ENCODE measurements at regions of chr2 and their contacts with region 1.

Region 1: GRCh38 chr2:118855451-118856279 is 8.2 kb upstream of the EN1 start:
- DNase-seq: peak; percentile 52
- ATAC-seq: peak; percentile 99
- H3K4me3 ChIP-seq: no peak overlapping the region
- H3K27ac ChIP-seq: no peak overlapping the region
- H3K4me1 ChIP-seq: no peaks in the 10 kb centered on the region
- H3K27me3 ChIP-seq: peaks cover 95% of the 10 kb centered on the region
- CTCF ChIP-seq: peak; percentile 94
- POLR2A ChIP-seq: no peak
- RAD21 ChIP-seq: peak; percentile 96

Region 2: DNA sequence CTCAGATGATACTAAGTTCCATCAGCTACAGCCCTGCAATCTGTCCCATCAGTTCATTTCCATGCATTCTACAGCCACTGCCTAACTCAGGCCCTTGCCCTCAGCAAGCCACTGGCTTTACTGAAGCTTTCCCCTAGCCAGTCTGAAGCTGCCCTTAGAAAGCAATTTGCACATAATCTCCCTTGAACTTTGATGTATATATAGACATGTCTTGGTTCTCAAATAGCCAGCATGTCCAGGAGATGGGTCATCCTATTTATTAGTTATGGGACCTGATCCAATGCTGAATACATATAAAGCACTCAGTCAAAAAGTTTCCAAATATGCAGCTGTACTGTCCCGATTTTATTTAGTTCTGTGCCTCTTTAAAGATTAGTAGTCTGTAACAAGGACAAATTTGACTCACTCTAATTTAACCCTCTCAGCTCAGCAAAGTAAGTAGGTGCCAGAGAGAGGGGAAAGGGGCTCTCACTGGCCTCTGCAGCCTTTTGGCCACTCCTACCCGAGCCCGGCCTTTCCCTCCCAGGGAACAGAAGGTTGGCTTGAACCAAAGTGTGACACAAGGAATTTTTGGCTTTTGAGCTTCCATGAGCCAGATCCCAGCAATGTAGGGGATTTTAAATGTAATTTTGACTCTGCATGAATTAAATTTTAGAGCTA is 912.5 kb before region 1 on chr2:
- CTCF ChIA-PET with region 1: no interaction called
- POLR2A ChIA-PET with region 1: no interaction called
- dilution Hi-C with region 1: no loop called
- in situ Hi-C with region 1: no loop called
- intact Hi-C with region 1: no loop called
- DNase-seq: peak; percentile 79
- ATAC-seq: peak; percentile 88
- H3K4me3 ChIP-seq: no peak overlapping the region
- H3K27ac ChIP-seq: 0 out of 2 replicates have a peak overlapping the region, but pooled peaks have one; percentile 10
- H3K4me1 ChIP-seq: peaks cover 8% of the 10 kb centered on the region
- H3K27me3 ChIP-seq: no peaks in the 10 kb centered on the region
- CTCF ChIP-seq: no peak
- POLR2A ChIP-seq: no peak
- RAD21 ChIP-seq: no peak

Region 3: GRCh38 chr2:118032169-118033013 is 823.3 kb before region 1 on chr2:
- CTCF ChIA-PET with region 1: no interaction called
- POLR2A ChIA-PET with region 1: no interaction called
- dilution Hi-C with region 1: no loop called
- in situ Hi-C with region 1: loop called (anchors 25 kb)
- intact Hi-C with region 1: no loop called
- DNase-seq: peak; percentile 34
- ATAC-seq: peak; percentile 90
- H3K4me3 ChIP-seq: no peak overlapping the region
- H3K27ac ChIP-seq: no peak overlapping the region
- H3K4me1 ChIP-seq: no peaks in the 10 kb centered on the region
- H3K27me3 ChIP-seq: peaks cover 5% of the 10 kb centered on the region
- CTCF ChIP-seq: peak; percentile 69
- POLR2A ChIP-seq: no peak
- RAD21 ChIP-seq: peak; percentile 41

Region 4: GRCh38 chr2:118202707-118203303 is 652.9 kb before region 1 on chr2:
- CTCF ChIA-PET with region 1: no interaction called
- POLR2A ChIA-PET with region 1: no interaction called
- dilution Hi-C with region 1: no loop called
- in situ Hi-C with region 1: no loop called
- intact Hi-C with region 1: loop called (anchors 5 kb)
- DNase-seq: peak; percentile 36
- ATAC-seq: peak; percentile 96
- H3K4me3 ChIP-seq: no peak overlapping the region
- H3K27ac ChIP-seq: no peak overlapping the region
- H3K4me1 ChIP-seq: no peaks in the 10 kb centered on the region
- H3K27me3 ChIP-seq: peaks cover 5% of the 10 kb centered on the region
- CTCF ChIP-seq: peak; percentile 72
- POLR2A ChIP-seq: no peak
- RAD21 ChIP-seq: peak; percentile 45

Region 5: GRCh38 chr2:118371515-118371914 is 484.1 kb before region 1 on chr2:
- CTCF ChIA-PET with region 1: interaction called, 3 read pairs
- POLR2A ChIA-PET with region 1: no interaction called
- dilution Hi-C with region 1: no loop called
- in situ Hi-C with region 1: no loop called
- intact Hi-C with region 1: loop called (anchors 1 kb)
- DNase-seq: peak; percentile 18
- ATAC-seq: peak; percentile 59
- H3K4me3 ChIP-seq: no peak overlapping the region
- H3K27ac ChIP-seq: no peak overlapping the region
- H3K4me1 ChIP-seq: no peaks in the 10 kb centered on the region
- H3K27me3 ChIP-seq: no peaks in the 10 kb centered on the region; the same call in 1 of the 2 replicates
- CTCF ChIP-seq: peak; percentile 39
- POLR2A ChIP-seq: no peak
- RAD21 ChIP-seq: peak; percentile 60

Region 6: GRCh38 chr2:118539290-118539689 is 316.4 kb before region 1 on chr2:
- CTCF ChIA-PET with region 1: interaction called, 5 read pairs
- POLR2A ChIA-PET with region 1: no interaction called
- dilution Hi-C with region 1: no loop called
- in situ Hi-C with region 1: no loop called
- intact Hi-C with region 1: loop called (anchors 1 kb)
- DNase-seq: peak; percentile 34
- ATAC-seq: peak; percentile 48; the same call in 1 of the 2 replicates
- H3K4me3 ChIP-seq: no peak overlapping the region
- H3K27ac ChIP-seq: no peak overlapping the region
- H3K4me1 ChIP-seq: no peaks in the 10 kb centered on the region
- H3K27me3 ChIP-seq: no peaks in the 10 kb centered on the region
- CTCF ChIP-seq: peak; percentile 48
- POLR2A ChIP-seq: no peak
- RAD21 ChIP-seq: peak; percentile 44

Region 7: GRCh38 chr2:118705032-118705431 is 150.6 kb before region 1 on chr2:
- CTCF ChIA-PET with region 1: no interaction called
- POLR2A ChIA-PET with region 1: no interaction called
- dilution Hi-C with region 1: no loop called
- in situ Hi-C with region 1: no loop called
- intact Hi-C with region 1: no loop called
- DNase-seq: peak; percentile 1
- ATAC-seq: no peak
- H3K4me3 ChIP-seq: no peak overlapping the region
- H3K27ac ChIP-seq: no peak overlapping the region
- H3K4me1 ChIP-seq: no peaks in the 10 kb centered on the region
- H3K27me3 ChIP-seq: peaks cover 10% of the 10 kb centered on the region
- CTCF ChIP-seq: no peak
- POLR2A ChIP-seq: no peak
- RAD21 ChIP-seq: no peak

Region 8: DNA sequence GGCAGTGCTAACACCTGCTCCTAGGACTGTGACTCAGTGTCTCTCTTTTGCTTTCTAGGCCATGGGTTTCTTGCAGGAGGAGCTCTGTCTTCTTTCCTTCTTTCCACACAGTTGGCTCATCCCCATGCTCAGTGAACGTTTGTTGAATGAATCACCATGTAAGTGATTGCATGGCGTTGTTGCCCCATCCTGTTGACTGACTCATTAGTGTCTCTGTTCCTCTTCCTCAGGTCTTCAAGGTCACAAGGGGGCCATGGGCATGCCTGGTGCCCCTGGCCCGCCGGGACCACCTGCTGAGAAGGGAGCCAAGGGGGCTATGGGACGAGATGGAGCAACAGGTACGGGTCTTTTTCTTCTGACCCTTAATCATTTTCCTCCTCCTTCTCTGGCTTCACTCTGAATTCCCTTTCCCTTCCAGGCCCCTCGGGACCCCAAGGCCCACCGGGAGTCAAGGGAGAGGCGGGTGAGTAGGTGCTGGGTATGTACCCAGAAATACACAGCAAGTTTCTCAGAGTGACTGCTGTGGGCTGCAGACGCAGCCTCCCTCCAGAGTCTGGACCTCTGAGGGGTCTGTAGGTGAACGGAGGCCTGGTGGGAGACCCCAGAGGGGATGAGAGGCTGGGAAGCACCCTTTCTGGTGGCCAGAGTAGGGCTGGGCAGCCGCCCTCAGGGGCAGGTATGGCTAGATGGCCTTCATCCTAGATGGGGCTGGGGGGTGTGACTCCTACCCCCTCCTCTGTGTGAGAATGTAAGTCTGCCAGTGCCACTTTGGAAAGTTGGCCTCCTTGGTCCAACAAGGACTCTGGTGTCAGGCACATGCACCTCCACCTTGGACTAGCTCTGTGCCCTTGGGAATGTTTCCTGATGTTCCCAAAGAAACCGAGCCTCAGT is 118.7 kb after region 1 on chr2:
- CTCF ChIA-PET with region 1: no interaction called
- POLR2A ChIA-PET with region 1: no interaction called
- dilution Hi-C with region 1: no loop called
- in situ Hi-C with region 1: no loop called
- intact Hi-C with region 1: no loop called
- DNase-seq: peak; percentile 17
- ATAC-seq: no peak
- H3K4me3 ChIP-seq: no peak overlapping the region
- H3K27ac ChIP-seq: no peak overlapping the region
- H3K4me1 ChIP-seq: no peaks in the 10 kb centered on the region
- H3K27me3 ChIP-seq: no peaks in the 10 kb centered on the region
- CTCF ChIP-seq: no peak
- POLR2A ChIP-seq: no peak
- RAD21 ChIP-seq: no peak